Activated CD4-positive, alpha-beta memory T cell treated with anti-CD3 and anti-CD28 coated beads, Interleukin-2, amount 10 ng/mL, durations not matched to agents 7 days and 5 days (primary cell): ENCODE measurements at regions of chr11 and their contacts with region 1.

Region 1: GRCh38 chr11:63660972-63661371 is 10.2 kb downstream of the ATL3 start:
- DNase-seq: no peak
- H3K4me3 Mint-ChIP-seq: no peak overlapping the region
- H3K27ac Mint-ChIP-seq: no peak overlapping the region
- H3K4me1 Mint-ChIP-seq: peaks cover 10% of the 10 kb centered on the region
- H3K27me3 Mint-ChIP-seq: no peaks in the 10 kb centered on the region

Region 2: DNA sequence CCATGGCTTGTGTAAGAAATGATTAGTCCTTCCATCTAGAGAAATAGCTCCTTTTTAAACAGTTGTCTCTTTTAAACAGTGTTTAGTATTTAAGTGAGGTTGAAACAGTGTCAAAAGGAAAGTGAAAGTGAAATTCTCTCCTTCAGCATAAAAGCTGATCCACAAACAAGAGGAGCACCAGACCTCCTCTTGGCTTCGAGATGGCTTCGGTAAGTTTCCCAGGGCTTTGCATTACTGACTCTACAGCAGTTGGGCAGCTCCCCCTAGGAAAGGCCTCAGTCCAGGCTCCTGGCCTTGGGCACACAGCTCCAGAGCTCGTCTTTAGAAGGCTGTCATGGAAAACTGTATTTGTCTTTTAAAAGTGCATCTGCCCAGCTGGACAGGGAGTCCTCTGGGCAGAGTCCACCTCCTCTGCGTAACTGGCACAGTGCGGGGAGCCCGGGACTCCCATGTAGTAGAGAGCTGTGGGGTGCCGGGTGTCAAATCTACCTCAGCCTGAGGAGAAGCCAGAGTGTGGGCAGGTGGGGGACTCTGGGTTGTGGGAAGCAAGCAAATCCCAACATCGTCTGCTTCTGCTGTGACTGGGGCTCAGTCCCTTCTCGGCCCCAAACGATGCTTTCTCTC is 124.2 kb before region 1 on chr11 and contains the start of gene PLAAT4:
- CTCF ChIA-PET with region 1: no interaction called
- POLR2A ChIA-PET with region 1: no interaction called
- DNase-seq: peak; percentile 45
- H3K4me3 Mint-ChIP-seq: peak within 1 kb of the TSS; percentile 80
- H3K27ac Mint-ChIP-seq: peak within 1 kb of the TSS; percentile 77
- H3K4me1 Mint-ChIP-seq: peaks cover 68% of the 10 kb centered on the region
- H3K27me3 Mint-ChIP-seq: no peaks in the 10 kb centered on the region
- total RNA-seq, gene PLAAT4: 104 to 106 TPM

Region 3: GRCh38 chr11:63671322-63672155 is 10.6 kb after region 1 on chr11 and contains the start of gene ATL3:
- CTCF ChIA-PET with region 1: interaction called, 3 read pairs
- POLR2A ChIA-PET with region 1: interaction called, 11 read pairs
- DNase-seq: peak; percentile 96
- H3K4me3 Mint-ChIP-seq: peak within 1 kb of the TSS; percentile 80
- H3K27ac Mint-ChIP-seq: peak within 1 kb of the TSS; percentile 75
- H3K4me1 Mint-ChIP-seq: peaks cover 39% of the 10 kb centered on the region
- H3K27me3 Mint-ChIP-seq: no peaks in the 10 kb centered on the region
- total RNA-seq, gene ATL3: 33.0 to 33.2 TPM